ENCODE measurements at regions of chr13 and their contacts with region 1.

Region 1: DNA sequence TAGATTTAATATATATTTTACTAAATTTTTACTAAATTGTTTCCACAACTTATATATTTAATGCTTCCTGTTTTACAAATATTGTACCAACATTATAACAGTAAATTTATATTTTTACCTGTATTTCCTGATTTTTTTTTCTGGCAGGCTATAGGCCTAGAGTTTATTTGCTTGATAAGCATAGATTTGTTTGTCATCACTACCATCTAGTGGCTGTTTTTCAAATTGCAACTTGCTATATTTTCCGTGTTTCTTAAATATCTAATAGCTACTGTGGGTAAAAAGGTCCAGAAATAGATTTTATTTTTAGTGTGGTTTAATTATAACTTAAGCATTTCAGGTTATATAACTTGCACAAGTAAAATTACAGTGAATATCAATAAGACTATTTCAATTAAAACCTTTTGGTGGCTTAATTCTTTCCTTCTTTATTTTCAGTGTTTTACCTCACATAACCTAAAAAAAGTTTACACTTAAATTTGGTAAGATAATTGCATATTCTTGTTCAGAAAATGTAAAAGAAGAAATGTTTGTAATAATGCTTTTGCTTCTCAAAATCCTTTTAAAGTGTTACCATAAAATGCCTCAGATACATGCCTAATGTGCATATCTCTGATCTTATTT is 60.6 kb downstream of the NDFIP2 start:
- DNase-seq: peak; percentile 62
- ATAC-seq: peak; percentile 53; the same call in 2 of the 3 replicates
- H3K4me3 ChIP-seq: no peak overlapping the region
- H3K27ac ChIP-seq: no peak overlapping the region
- H3K4me1 ChIP-seq: no peaks in the 10 kb centered on the region
- H3K27me3 ChIP-seq: no peaks in the 10 kb centered on the region
- CTCF ChIP-seq: peak; percentile 61
- EP300 ChIP-seq: no peak
- POLR2A ChIP-seq: no peak
- RAD21 ChIP-seq: peak; percentile 43; the same call in 1 of the 2 replicates

Region 2: GRCh38 chr13:79480954-79481684 is 60.4 kb before region 1 on chr13 and contains the start of gene NDFIP2:
- CTCF ChIA-PET with region 1: no interaction called
- POLR2A ChIA-PET with region 1: no interaction called
- in situ Hi-C with region 1: no loop called
- intact Hi-C with region 1: loop called (anchors 5 kb)
- DNase-seq: peak; percentile 76
- ATAC-seq: peak; percentile 93
- H3K4me3 ChIP-seq: peak within 1 kb of the TSS; percentile 72 to 91 (median 84)
- H3K27ac ChIP-seq: peak within 1 kb of the TSS; percentile 81
- H3K4me1 ChIP-seq: peaks cover 55% of the 10 kb centered on the region
- H3K27me3 ChIP-seq: no peaks in the 10 kb centered on the region; a peak in 1 of 5 replicates
- CTCF ChIP-seq: peak; percentile 30; the same call in 1 of the 2 replicates
- EP300 ChIP-seq: no peak
- POLR2A ChIP-seq: peak; percentile 75 to 83
- RAD21 ChIP-seq: 0 out of 2 replicates have a peak, but pooled peaks have one; percentile 14
- total RNA-seq, gene NDFIP2: 32.0 and 32.6 TPM in 2 replicates

Measured in HepG2 (cell line).